Mammary epithelial cell (primary cell): ENCODE measurements at regions of chr5 and their contacts with region 1.

Region 1: DNA sequence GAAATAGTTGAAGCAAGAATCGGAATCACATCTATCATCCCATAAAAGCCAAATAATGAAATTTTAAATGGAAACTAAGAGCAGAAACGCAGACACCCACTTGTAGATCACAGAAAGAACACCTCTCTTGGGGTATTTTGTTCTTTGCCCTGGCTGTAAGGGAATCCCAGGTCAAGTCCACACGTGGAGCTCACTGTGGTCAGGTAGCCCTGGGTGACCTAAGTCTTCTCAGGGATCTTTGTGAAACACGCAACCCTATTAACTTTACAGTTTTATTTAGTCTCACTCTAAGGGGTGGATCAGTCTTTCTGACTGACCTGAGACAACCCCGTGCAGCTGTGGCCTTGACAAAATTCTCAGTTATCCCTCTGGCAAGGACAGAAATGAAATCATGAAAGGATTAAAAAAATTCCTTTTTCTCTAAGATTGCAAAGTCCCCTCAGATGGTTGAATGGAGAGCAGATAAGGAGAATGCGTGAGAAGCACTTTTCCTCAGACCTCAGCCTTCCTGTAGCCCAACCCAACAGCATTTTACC is 111.6 kb downstream of the NREP start:
- DNase-seq: no peak
- H3K4me3 ChIP-seq: no peak overlapping the region
- H3K27ac ChIP-seq: no peak overlapping the region
- H3K4me1 ChIP-seq: peaks cover 8% of the 10 kb centered on the region
- H3K27me3 ChIP-seq: no peaks in the 10 kb centered on the region
- CTCF ChIP-seq: no peak

Region 2: DNA sequence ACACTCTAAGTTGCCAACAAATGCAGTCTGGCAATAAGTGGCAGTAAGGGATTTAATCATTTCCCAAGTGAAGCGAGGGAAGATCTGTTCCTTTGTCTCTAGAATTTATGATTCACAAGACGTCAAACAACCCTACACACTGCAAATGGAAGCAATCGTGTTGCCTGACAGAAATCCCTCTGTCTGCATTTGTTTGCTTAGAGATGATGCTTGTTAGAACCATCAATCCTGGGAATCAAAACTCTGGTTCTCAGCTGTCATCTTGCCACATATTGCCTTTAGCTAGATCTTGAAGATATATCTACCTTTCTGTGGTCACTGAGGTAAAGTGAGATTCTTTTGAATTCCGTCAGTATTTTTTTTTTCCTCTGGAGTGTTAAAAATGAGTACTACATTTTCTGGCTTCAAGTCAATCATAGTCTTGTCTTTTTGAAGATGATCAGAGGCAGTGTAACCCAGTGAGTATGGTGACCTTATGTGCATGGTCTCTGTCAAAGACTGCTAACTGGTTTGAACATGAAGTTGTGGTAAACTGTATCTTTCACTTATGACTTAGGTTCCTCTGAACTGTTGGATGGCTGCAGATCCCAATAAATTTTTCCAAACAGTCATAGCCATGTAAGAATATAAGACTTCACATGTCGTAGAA is 26.6 kb before region 1 on chr5:
- CTCF ChIA-PET with region 1: no interaction called
- dilution Hi-C with region 1: loop called (anchors 5 kb)
- in situ Hi-C with region 1: no loop called
- intact Hi-C with region 1: no loop called
- DNase-seq: peak; percentile 72
- H3K4me3 ChIP-seq: no peak overlapping the region
- H3K27ac ChIP-seq: no peak overlapping the region
- H3K4me1 ChIP-seq: no peaks in the 10 kb centered on the region
- H3K27me3 ChIP-seq: no peaks in the 10 kb centered on the region
- CTCF ChIP-seq: no peak

Region 3: GRCh38 chr5:111685971-111686370 is 40.6 kb after region 1 on chr5:
- CTCF ChIA-PET with region 1: no interaction called
- dilution Hi-C with region 1: no loop called
- in situ Hi-C with region 1: no loop called
- intact Hi-C with region 1: no loop called
- DNase-seq: no peak
- H3K4me3 ChIP-seq: no peak overlapping the region
- H3K27ac ChIP-seq: no peak overlapping the region
- H3K4me1 ChIP-seq: peaks cover 9% of the 10 kb centered on the region
- H3K27me3 ChIP-seq: no peaks in the 10 kb centered on the region
- CTCF ChIP-seq: peak; percentile 32 to 34

Region 4: DNA sequence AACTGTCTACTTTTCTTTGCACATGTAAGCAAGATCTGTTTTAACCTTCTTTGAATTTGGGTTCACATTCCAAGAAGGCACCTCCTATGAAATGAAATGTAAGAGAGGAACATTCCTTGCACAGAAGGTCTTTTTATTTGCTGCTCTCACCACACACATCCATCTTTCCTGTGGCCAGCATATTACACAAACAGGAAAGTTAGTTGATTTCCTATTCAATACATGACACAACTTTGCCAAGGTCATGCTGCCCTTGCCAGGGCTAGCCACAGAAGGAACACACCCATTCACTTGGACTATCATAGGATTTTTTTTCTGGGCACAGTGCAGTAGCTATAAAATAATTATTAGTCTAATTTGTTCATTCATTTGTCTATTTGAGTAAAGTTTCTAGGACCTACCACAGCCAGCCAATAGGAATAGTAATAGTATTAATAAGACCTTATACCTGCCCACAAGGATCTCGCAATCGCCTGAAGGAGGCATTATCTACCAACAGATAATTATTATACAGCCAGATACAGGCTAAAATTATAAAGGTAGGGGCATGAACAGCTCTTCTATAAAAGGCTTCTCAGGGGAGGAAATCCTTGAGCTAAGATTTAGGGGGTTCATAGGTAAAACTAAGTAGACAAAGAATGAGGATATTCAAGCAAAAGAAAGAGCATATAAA is 189.7 kb after region 1 on chr5:
- CTCF ChIA-PET with region 1: no interaction called
- dilution Hi-C with region 1: no loop called
- in situ Hi-C with region 1: no loop called
- intact Hi-C with region 1: no loop called
- DNase-seq: no peak
- H3K4me3 ChIP-seq: no peak overlapping the region
- H3K27ac ChIP-seq: no peak overlapping the region
- H3K4me1 ChIP-seq: peaks cover 1% of the 10 kb centered on the region
- H3K27me3 ChIP-seq: peaks cover 10% of the 10 kb centered on the region
- CTCF ChIP-seq: peak; percentile 15 to 22